ENCODE measurements at regions of chr11 and their contacts with region 1.

Region 1: DNA sequence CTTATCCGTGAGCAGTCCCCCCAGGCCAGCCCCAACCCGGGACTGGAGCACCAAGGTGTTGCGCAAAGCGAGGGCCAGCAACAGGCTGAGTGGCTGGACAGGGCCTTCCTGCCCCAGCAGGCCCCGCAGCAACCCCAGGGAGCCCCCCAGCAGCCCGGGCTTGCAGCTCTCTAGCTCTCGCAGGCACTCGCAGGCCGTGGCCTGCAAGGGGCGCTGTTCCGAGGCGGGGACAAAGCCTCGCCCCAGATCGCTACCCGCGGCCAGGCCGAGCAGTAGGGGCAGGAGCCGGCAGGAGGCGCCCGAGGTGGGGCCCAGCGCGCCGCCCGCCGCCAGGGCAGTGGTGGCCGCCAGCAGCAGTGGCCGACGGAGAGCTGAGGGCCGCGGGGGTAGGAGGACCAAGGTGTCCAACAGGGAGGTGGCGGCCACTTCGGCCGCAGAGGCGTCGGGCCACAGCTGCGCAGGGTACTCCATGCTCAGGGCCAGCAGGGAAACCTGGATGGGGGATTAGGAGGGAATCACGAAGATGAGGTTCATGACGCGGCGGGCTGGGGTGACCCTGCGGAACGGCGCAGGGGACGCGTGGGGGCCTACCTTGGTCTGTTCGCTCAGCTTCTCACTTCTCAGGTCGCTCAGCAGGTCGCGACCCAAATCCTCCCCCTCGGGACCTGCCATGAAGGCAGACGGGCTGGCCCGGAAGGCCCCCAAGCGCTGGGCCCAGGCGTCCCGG is 762 bp downstream of the AP5B1 start:
- DNase-seq: peak; percentile 81 to 92 (median 91)
- H3K4me3 ChIP-seq: peak overlapping the region; percentile 56 to 85 (median 72)
- H3K27ac ChIP-seq: peak overlapping the region in 1 of 2 experiments; percentile 77
- H3K4me1 ChIP-seq: peaks cover 0 to 37% (median 19%) of the 10 kb centered on the region in 4 experiments
- H3K27me3 ChIP-seq: peaks cover 0 to 33% (median 6%) of the 10 kb centered on the region in 5 experiments

Region 2: DNA sequence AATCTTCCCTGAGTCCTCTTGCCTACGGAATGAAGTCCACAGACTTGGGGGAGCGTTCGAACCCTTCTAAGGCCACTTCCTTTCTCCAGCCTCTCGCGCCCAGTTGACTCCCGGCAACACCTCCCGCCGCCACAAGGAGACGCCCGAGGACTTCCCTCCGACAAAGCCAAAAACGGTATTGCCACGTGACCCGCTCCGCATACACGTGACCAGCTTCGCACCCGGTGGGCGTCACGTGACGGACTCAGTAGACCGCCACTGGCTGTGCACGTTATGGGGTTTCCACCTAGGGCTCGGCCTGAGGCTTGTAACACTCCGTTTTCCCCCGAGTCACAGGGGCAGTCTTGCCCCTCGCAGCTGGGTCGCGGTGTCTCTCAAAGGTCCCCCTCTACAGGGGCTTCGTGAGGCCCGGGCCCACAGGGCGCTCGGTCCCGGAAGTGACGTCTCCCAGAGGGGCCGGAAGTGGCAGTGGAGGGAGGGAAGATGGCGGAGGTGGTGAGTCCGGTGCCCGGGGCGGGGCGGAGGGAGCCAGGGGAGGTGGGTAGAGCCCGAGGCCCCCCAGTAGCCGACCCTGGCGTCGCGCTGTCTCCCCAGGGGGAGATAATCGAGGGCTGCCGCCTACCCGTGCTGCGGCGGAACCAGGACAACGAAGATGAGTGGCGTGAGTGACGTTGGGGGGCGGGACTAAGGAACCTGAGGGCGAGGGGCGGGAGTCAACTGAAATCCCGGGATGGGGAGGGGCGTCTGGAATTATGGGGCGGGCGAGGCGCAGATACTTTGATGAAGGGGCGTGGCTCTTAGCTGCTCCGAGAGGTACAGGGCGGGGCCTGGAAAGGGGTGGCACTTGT is 68.0 kb before region 1 on chr11 and contains the start of gene KAT5:
- CTCF ChIA-PET with region 1: interaction called, 15 read pairs
- POLR2A ChIA-PET with region 1: interaction called, 7 read pairs
- DNase-seq: peak; percentile 98 to 99 (median 99)
- H3K4me3 ChIP-seq: peak within 1 kb of the TSS; percentile 46 to 88 (median 76)
- H3K27ac ChIP-seq: peak within 1 kb of the TSS; percentile 98 to 99
- H3K4me1 ChIP-seq: peaks cover 2 to 22% (median 13%) of the 10 kb centered on the region in 4 experiments
- H3K27me3 ChIP-seq: no peaks in the 10 kb centered on the region

Region 3: DNA sequence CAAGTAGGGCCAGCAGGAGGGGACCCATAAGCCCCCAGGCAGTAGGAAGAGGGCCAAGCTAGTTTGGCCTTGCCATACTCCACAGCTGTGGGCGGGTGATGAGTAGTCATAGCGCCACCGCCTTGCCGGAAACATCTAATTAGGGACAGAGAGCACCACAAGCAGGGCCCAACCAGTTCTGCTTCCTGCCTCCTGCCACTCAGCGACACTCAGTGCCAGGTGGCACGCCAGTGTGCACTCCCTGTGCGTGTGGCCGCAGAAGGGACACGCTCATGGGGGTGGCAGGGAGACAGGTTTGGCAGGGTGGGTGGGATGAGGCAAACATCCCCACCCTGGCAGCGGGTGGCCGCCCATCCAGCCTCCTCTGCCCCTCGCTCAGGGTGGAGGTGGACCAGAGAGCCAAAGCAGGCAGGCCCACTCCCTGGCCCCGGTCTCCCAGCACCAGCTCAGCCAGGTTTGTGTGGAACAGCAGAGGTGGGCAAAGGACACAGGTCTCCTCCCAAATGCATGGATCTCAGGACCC is 11.7 kb after region 1 on chr11:
- CTCF ChIA-PET with region 1: interaction called, 81 read pairs
- POLR2A ChIA-PET with region 1: interaction called, 10 read pairs
- DNase-seq: peak; percentile 63 to 93 (median 91)
- H3K4me3 ChIP-seq: peak overlapping the region in 1 of 7 experiments; percentile 7
- H3K27ac ChIP-seq: no peak overlapping the region
- H3K4me1 ChIP-seq: peaks cover 0 to 37% (median 32%) of the 10 kb centered on the region in 4 experiments
- H3K27me3 ChIP-seq: peaks cover 0 to 30% (median 15%) of the 10 kb centered on the region in 5 experiments

Region 4: DNA sequence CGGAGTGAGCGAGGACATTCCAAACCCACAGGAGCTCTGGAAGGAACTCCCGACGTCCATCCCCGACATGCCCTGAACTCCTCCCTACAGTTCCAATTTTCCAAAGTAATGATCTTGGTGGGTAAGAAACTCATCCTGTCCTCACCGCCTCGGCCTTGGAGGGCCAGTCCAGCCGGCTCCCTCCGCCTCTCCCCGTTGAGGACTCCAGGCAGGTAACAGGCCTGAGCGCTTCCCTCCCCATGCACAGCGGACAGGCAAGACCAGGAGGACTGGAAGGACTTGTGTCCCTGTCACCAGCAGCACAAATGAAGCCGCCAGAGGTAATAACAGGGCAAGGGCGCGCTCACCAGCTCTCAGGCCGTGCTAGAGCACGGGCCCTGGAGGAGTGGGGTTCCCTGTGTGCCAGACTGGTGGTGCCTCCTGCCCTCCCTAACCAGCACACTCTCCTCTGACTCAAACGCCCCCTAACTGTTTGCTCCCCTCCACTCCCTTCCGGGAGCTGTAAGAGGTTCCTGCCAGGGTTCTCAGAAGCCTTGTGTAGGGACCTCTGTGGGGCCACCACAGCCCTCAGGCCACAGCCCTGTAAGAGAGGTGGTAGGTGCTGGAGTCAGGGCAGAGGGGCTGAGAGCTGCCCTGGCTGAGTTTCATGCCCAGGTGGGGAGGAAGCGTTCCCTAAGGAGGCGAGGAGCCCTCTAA is 23.9 kb after region 1 on chr11:
- CTCF ChIA-PET with region 1: interaction called, 30 read pairs
- POLR2A ChIA-PET with region 1: no interaction called
- DNase-seq: peak in 1 of 3 donors; percentile 38
- H3K4me3 ChIP-seq: no peak overlapping the region
- H3K27ac ChIP-seq: no peak overlapping the region
- H3K4me1 ChIP-seq: peaks cover 0 to 4% (median 0%) of the 10 kb centered on the region in 4 experiments
- H3K27me3 ChIP-seq: peaks cover 0 to 31% (median 5%) of the 10 kb centered on the region in 5 experiments

Region 5: DNA sequence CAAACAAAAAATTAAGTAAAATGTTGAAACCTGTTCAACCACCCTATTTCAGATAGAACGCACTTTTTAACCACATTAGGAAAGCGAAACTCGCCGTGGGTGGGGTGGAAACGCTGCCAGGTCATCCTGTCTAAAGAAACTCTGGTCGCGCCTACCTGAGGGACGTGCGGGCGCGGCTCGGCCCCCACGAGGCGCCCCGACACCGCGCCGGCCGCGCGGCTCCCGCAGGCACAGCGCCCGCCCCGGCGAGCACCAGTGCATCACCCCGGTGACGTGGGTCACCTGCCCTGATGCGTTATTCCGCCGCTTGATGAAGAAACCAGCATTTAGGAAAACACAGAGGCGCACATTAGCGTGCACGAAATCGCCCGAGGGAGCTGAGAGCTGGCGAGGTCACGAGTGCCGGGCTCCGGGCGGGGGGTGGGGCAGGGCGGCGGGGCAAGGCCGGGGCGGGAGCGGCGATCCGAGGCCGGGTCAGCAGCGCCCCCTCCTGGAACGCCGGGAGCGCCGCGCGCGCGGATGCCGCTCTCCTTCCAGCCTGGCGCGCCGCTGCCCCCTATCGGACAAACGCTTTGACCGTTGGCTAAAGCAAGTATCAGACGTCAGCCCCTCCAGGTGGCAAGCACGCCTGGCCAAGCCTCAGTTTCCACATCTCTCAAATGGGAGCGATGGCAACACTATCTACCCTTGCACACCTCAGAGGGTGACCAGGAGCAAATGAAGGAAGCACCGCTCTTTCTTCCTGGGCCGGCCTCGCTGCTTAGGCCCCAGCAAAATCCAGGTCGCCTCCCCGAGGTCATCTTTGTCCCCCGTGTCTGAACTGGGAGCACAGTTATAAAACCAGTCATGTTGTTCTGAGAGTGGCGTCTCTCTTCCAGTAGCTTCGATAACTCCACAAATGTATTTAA is 38.1 kb after region 1 on chr11:
- CTCF ChIA-PET with region 1: interaction called, 137 read pairs
- POLR2A ChIA-PET with region 1: no interaction called
- DNase-seq: peak; percentile 87 to 93 (median 92)
- H3K4me3 ChIP-seq: peak overlapping the region; percentile 50 to 89 (median 75)
- H3K27ac ChIP-seq: peak overlapping the region in 1 of 2 experiments; percentile 62
- H3K4me1 ChIP-seq: peaks cover 3 to 17% (median 15%) of the 10 kb centered on the region in 4 experiments
- H3K27me3 ChIP-seq: no peaks in the 10 kb centered on the region

Region 6: GRCh38 chr11:66035653-66036333 is 255.8 kb after region 1 on chr11:
- CTCF ChIA-PET with region 1: no interaction called
- POLR2A ChIA-PET with region 1: no interaction called
- DNase-seq: no peak
- H3K4me3 ChIP-seq: no peak overlapping the region
- H3K27ac ChIP-seq: no peak overlapping the region
- H3K4me1 ChIP-seq: no peaks in the 10 kb centered on the region
- H3K27me3 ChIP-seq: peaks cover 0 to 4% (median 0%) of the 10 kb centered on the region in 5 experiments

Region 7: DNA sequence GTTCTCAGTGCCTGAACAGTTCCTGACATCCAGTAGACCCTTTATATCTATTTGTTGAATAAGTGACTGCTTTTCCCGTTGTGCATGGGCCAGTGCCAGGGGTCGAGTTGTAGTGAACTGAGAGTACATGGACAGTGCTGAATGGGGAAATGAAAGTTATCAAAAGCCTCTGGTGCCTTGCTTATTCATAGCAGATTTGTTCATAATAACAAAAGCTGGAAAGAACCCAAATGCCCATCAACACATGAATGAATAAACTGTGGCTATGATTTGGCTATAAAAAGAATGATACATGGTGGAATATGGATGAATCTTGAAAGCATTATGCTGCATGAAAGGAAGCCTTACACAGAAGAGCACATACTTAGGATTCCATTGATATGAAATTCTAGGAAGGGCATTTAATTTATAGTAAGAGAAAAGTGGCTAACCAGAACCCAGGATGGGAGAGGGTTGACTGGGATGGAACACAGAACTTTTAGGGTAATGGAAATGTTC is 332.6 kb after region 1 on chr11:
- CTCF ChIA-PET with region 1: no interaction called
- POLR2A ChIA-PET with region 1: no interaction called
- DNase-seq: no peak
- H3K4me3 ChIP-seq: no peak overlapping the region
- H3K27ac ChIP-seq: peak overlapping the region in 1 of 2 experiments; percentile 1
- H3K4me1 ChIP-seq: peaks cover 39 to 51% (median 39%) of the 10 kb centered on the region in 4 experiments
- H3K27me3 ChIP-seq: no peaks in the 10 kb centered on the region

Measured in common myeloid progenitor, CD34-positive (primary cell).